HEK293 (cell line): ENCODE measurements at regions of chrX and their contacts with region 1.

Region 1: DNA sequence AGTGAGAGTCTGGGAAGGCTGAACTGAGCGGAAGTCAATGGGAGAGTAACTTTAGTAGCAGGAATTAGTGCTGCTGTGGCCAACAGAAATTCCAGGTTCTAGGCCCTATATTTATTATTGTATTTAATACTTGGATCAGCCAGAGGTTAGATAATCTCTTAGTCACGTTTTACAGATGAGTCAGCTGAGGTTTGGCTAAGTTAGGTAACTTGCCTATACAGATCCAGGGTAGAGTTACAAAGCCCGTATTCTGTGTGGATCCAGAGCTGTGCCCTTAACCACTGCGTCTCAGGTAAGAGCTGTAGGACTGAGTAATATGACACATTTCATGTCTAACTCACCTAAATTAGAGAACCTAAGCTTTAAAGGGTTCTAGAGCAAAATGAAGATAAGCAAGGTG is 20.5 kb downstream of the PSMD10 start:
- H3K4me3 ChIP-seq: no peak overlapping the region
- H3K27ac ChIP-seq: no peak overlapping the region
- H3K4me1 ChIP-seq: no peaks in the 10 kb centered on the region
- CTCF ChIP-seq: no peak

Region 2: DNA sequence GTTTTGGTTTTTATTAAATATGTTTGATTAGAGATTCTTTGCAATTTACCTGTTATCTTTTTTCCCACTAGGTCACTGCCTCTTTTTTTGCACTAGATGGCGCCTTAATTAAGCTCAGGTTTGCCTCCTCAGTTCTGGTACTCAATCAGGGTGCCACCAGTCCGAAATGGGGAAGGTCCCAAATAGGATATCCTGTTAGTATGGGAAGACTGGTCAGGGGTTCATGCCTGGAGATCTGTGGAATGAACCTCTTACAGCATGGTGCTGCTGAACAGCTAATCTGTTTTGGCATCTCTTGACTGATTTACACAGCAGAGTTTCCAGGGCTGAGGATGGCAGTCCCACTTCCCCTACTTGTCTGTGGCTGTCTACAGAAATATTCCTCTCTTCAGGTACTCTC is 50.3 kb before region 1 on chrX:
- CTCF ChIA-PET with region 1: interaction called, 22 read pairs
- POLR2A ChIA-PET with region 1: no interaction called
- H3K4me3 ChIP-seq: no peak overlapping the region
- H3K27ac ChIP-seq: no peak overlapping the region
- H3K4me1 ChIP-seq: no peaks in the 10 kb centered on the region
- CTCF ChIP-seq: no peak; the same call in 1 of the 2 replicates

Region 3: GRCh38 chrX:108105473-108105872 is 34.6 kb after region 1 on chrX:
- CTCF ChIA-PET with region 1: no interaction called
- POLR2A ChIA-PET with region 1: no interaction called
- H3K4me3 ChIP-seq: no peak overlapping the region
- H3K27ac ChIP-seq: no peak overlapping the region
- H3K4me1 ChIP-seq: no peaks in the 10 kb centered on the region
- CTCF ChIP-seq: no peak